ENCODE measurements at regions of chr17 and their contacts with region 1.

Region 1: GRCh38 chr17:74379495-74380085 is 12.3 kb downstream of the GPR142 start:
- DNase-seq: peak; percentile 87 to 98
- H3K4me3 ChIP-seq: no peak overlapping the region
- CTCF ChIP-seq: peak in 1 of 3 donors; percentile 10
- POLR2A ChIP-seq: no peak

Region 2: GRCh38 chr17:74212913-74213791 is 166.4 kb before region 1 on chr17 and contains the start of gene TTYH2:
- intact Hi-C with region 1: no loop called
- DNase-seq: peak; percentile 89 to 97
- H3K4me3 ChIP-seq: peak within 1 kb of the TSS; percentile 42
- CTCF ChIP-seq: no peak
- POLR2A ChIP-seq: no peak
- total RNA-seq, gene TTYH2: 4.3 to 12.7 (median 8.6) TPM

Region 3: DNA sequence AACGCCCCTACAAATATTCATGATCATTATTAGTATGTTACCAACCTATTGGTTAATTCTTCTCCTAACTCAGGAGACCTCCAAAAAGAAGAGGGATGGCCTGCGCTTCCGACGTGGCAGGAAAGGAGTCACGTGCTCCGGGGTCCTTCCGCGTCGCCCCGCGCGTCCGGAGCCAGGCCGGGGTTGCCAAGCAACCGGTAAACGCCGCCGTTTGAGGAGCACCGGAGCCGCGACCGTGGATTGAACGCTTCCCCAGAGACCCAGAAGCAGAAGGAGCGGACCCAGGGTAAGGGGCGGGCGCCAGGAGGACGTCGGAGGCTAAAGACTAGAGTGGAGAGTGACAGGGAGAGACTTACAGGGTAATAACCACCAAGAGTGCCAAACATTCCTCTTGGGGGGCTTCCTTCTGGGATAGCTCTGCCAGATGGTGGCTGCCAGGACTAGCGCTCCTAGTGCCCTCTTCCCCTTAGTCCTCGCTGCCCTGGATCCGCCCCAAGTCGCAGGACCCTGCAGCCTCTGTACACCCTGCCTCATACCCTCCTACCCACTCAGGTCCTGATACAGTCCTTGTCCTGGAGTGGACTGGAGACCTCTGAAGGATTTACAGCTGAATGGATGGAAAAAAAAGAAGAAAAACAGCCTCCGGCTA is 105.4 kb before region 1 on chr17 and contains the start of gene DNAI2:
- intact Hi-C with region 1: no loop called
- DNase-seq: no peak
- H3K4me3 ChIP-seq: no peak within 1 kb of the TSS
- CTCF ChIP-seq: no peak
- POLR2A ChIP-seq: no peak
- total RNA-seq, gene DNAI2: 0.57 TPM in 1 of 4 donors, not detected in the others

Region 4: GRCh38 chr17:74417178-74418045 is 37.8 kb after region 1 on chr17:
- intact Hi-C with region 1: no loop called
- DNase-seq: no peak
- H3K4me3 ChIP-seq: no peak overlapping the region
- CTCF ChIP-seq: peak in 1 of 3 donors; percentile 13
- POLR2A ChIP-seq: no peak

Region 5: DNA sequence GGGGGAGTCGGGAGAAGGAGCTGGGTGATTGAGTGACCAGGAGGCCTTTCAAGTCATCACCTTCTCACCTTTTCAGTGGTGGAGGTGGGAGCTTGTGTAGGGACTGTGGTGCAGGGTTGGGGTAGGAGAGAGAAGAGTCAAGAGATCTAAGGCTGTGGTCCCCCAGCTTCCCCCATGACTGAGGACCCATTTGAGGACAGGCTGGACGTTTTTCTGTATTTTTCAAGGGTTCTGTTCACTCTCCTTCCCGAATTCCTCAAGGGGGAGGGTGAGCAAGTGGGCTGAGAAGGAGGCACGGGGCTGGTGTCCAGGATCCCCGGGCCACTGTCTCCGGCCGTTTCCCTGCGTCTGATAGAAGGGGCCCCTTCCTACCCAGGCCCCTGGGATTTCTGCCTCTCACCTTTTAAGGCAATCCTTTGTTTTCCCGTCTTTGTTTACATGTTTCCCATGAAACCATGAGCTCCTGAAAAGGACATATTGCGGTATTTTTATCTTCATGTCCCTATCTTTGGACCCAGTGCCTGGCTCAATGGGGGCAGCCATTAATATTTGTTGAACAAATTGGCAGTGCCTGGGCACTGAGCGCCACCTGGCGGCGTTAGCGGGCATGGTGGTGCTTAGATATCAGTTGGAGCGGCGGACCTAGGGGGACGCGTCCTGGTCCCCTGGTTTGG is 77.7 kb after region 1 on chr17:
- intact Hi-C with region 1: loop called (anchors 2 kb)
- DNase-seq: peak; percentile 69 to 96
- H3K4me3 ChIP-seq: no peak overlapping the region
- CTCF ChIP-seq: peak in 1 of 3 donors; percentile 56
- POLR2A ChIP-seq: no peak